H1 (cell line): ENCODE measurements at regions of chr19 and their contacts with region 1.

Region 1: DNA sequence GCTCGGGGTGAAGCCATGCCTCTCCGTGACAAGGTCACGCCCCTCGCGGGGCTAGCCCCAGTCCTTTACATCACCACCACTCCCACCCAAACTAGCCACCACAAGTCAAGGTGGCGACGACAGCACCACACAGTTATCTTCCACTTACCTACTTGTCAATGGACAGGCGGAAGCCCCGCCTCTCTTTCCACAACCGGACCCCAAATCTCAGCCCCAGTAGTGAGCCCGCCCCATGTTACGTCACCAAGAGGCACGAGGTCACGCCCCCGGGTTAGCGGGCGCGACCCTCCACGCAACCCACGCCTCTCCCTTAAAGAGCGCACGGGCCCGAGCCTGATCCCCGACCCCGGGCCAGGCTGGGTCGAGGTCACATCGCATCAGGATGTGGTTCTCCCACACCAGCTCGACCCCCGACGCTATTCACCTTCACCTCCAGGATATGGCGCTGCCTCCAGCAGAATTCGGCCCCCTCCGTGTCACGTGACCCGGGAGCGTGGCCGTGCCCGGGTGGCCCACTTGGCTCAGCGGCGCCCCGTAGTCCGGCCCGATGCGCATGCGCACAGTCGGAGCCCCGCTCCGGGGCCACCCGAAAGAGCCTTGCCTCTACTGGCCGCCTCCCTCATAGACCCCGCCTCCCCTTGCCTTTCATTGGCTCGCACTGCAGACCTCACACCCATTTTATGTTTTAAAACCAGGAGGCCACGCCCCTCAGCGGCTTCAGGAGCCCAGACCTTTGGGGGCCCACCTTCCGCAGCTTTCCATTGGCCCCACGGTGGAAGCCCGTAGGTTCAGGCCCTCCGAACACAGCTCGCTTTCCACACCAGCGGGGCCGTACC is 18.2 kb downstream of the SYDE1 start:
- DNase-seq: peak; percentile 97 to 98
- H3K4me3 ChIP-seq: peak overlapping the region; percentile 68 to 90 (median 82)
- H3K27ac ChIP-seq: peak overlapping the region; percentile 96
- H3K4me1 ChIP-seq: peaks cover 0 to 9% (median 2%) of the 10 kb centered on the region in 4 experiments; a peak in 5 of 7 replicates
- H3K27me3 ChIP-seq: no peaks in the 10 kb centered on the region
- CTCF ChIP-seq: no peak
- EP300 ChIP-seq: no peak
- POLR2A ChIP-seq: peak; percentile 58 to 88
- RAD21 ChIP-seq: 0 out of 4 replicates have a peak, but pooled peaks of 1 of the 2 experiments have one; percentile 1

Region 2: GRCh38 chr19:15107061-15108010 is 18.1 kb before region 1 on chr19 and contains the start of gene SYDE1:
- CTCF ChIA-PET with region 1: interaction called, 28 read pairs
- POLR2A ChIA-PET with region 1: interaction called, 67 read pairs
- DNase-seq: peak in 1 of 2 experiments; percentile 83
- H3K4me3 ChIP-seq: peak within 1 kb of the TSS; percentile 59 to 96 (median 66)
- H3K27ac ChIP-seq: peak within 1 kb of the TSS; percentile 75
- H3K4me1 ChIP-seq: peaks cover 4 to 10% (median 6%) of the 10 kb centered on the region in 4 experiments
- H3K27me3 ChIP-seq: no peaks in the 10 kb centered on the region
- CTCF ChIP-seq: no peak
- EP300 ChIP-seq: no peak
- POLR2A ChIP-seq: peak; percentile 56 to 61; a peak in 2 of 3 replicates
- RAD21 ChIP-seq: no peak
- total RNA-seq, gene SYDE1: 16.8 and 17.7 TPM in 2 replicates